ENCODE measurements at regions of chr2 and their contacts with region 1.

Region 1: GRCh38 chr2:55718165-55719008 is 24.7 kb upstream of the PNPT1 start:
- DNase-seq: peak; percentile 43
- H3K4me3 ChIP-seq: no peak overlapping the region
- H3K27ac ChIP-seq: no peak overlapping the region
- H3K27me3 ChIP-seq: peaks cover 3% of the 10 kb centered on the region
- CTCF ChIP-seq: peak; percentile 85

Region 2: GRCh38 chr2:55693181-55694134 is 24.9 kb before region 1 on chr2 and contains the start of gene PNPT1:
- CTCF ChIA-PET with region 1: interaction called, 23 read pairs
- POLR2A ChIA-PET with region 1: no interaction called
- DNase-seq: peak; percentile 81
- H3K4me3 ChIP-seq: peak within 1 kb of the TSS; percentile 99
- H3K27ac ChIP-seq: no peak within 1 kb of the TSS
- H3K27me3 ChIP-seq: no peaks in the 10 kb centered on the region
- CTCF ChIP-seq: no peak
- polyA plus RNA-seq, gene PNPT1: 11.5 and 15.9 TPM in 2 replicates

Region 3: GRCh38 chr2:55771612-55772011 is 53.2 kb after region 1 on chr2:
- CTCF ChIA-PET with region 1: interaction called, 46 read pairs
- POLR2A ChIA-PET with region 1: no interaction called
- DNase-seq: no peak
- H3K4me3 ChIP-seq: no peak overlapping the region
- H3K27ac ChIP-seq: no peak overlapping the region
- H3K27me3 ChIP-seq: no peaks in the 10 kb centered on the region
- CTCF ChIP-seq: peak; percentile 77

Region 4: DNA sequence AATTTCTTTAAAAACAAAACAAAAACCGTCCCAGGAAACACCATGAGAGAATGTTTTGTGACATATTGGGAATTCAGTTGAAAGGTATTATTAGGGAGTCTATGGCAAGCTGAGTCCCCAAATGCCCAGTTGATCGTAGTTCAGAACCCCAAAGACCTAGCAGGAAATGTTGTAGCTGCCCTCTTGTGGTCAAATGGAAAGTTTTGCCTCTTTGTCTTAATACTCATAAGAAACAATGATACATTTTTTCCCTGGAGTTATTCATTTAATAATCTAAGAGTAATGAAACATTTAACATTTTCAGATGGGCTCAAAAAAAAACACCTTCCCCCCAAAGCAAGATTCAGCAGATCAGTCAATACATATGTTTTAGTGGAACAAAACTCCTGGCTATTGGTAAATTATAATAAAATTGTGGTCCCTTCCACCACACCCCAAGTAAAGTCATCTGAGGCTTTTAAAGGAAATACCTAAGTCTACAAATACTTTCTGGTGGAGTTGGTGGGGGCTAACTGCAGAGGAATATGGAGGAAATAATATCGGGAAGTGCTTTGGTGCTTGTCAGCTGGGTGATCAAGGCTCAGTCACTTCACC is 243.0 kb after region 1 on chr2:
- CTCF ChIA-PET with region 1: interaction called, 137 read pairs
- POLR2A ChIA-PET with region 1: no interaction called
- DNase-seq: peak; percentile 21
- H3K4me3 ChIP-seq: no peak overlapping the region
- H3K27ac ChIP-seq: no peak overlapping the region
- H3K27me3 ChIP-seq: no peaks in the 10 kb centered on the region
- CTCF ChIP-seq: peak; percentile 73

Region 5: GRCh38 chr2:56009758-56010458 is 291.5 kb after region 1 on chr2:
- CTCF ChIA-PET with region 1: interaction called, 123 read pairs
- POLR2A ChIA-PET with region 1: no interaction called
- DNase-seq: no peak
- H3K4me3 ChIP-seq: no peak overlapping the region
- H3K27ac ChIP-seq: no peak overlapping the region
- H3K27me3 ChIP-seq: no peaks in the 10 kb centered on the region
- CTCF ChIP-seq: peak; percentile 71

Region 6: DNA sequence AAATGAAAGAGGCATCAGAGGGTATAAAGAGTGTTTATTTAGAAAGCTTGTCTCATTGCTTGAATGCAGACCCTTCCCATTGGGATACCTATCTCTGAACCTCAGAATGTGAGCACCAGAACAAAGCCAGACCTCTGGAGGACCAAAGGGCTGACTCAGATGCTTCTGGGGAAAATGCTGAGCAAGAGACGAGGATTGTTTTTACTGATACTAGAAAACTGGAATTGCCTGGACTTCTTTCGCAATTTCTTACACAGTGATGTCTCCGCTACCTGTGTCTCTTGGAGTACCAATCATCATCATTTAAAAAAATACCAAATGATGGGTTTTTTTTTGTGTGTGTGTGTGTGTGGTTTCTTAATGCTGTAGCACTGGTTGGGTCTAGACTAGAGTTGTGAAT is 409.8 kb after region 1 on chr2:
- CTCF ChIA-PET with region 1: interaction called, 11 read pairs
- POLR2A ChIA-PET with region 1: no interaction called
- DNase-seq: no peak
- H3K4me3 ChIP-seq: no peak overlapping the region
- H3K27ac ChIP-seq: no peak overlapping the region
- H3K27me3 ChIP-seq: no peaks in the 10 kb centered on the region
- CTCF ChIP-seq: no peak